CD4-positive, alpha-beta T cell (primary cell): ENCODE measurements at regions of chr19 and their contacts with region 1.

Region 1: DNA sequence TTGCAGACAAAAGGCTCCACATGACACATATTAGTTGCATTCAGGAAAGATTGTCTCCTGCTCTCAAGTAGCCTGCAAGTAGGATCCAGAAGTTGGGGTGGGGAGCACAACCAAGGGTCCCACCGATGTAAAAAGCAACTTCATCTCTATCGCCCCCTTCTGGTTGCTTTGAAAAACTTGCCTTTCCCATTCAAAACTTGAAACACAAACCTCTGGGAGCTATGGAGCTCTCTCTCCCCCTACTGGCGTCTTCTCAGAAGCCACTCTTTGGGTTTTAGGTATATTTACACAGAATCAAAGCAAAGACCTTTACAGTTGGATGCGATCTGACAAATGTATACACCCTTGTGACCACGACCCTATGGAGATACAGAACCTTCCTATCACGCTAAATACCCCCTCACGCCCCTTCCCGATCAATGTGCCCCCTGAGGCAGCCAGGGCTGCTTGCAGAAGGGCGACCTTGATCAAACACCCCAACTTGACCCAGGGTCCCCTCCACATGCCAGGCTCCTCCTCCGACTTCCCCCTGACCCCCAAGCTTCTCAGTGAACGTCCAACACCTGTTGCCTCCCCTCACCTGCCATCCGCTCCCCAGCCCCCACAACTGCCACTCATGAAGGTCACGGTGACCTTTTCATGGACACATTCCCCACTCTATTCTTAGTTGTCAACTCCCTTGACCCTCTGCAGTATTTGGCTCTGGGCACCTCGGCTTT is 10.1 kb downstream of the NOSIP start:
- DNase-seq: peak in 12 of 14 experiments; percentile 50 to 94 (median 66)
- ATAC-seq: peak; percentile 7
- H3K4me3 ChIP-seq: no peak overlapping the region
- H3K4me3 Mint-ChIP-seq: peak overlapping the region; percentile 85
- H3K27ac ChIP-seq: no peak overlapping the region
- H3K27ac Mint-ChIP-seq: peak overlapping the region; percentile 89
- H3K4me1 ChIP-seq: peaks cover 64% of the 10 kb centered on the region
- H3K4me1 Mint-ChIP-seq: peaks cover 55% of the 10 kb centered on the region
- H3K27me3 ChIP-seq: no peaks in the 10 kb centered on the region
- H3K27me3 Mint-ChIP-seq: no peaks in the 10 kb centered on the region
- CTCF ChIP-seq: peak; percentile 99

Region 2: GRCh38 chr19:49224856-49225255 is 345.4 kb before region 1 on chr19:
- CTCF ChIA-PET with region 1: no interaction called
- POLR2A ChIA-PET with region 1: no interaction called
- intact Hi-C with region 1: loop called in 1 of 2 experiments (anchors 1 kb)
- DNase-seq: peak in 5 of 14 experiments; percentile 11 to 56 (median 27)
- ATAC-seq: peak; percentile 43
- H3K4me3 ChIP-seq: no peak overlapping the region
- H3K4me3 Mint-ChIP-seq: no peak overlapping the region
- H3K27ac ChIP-seq: no peak overlapping the region
- H3K27ac Mint-ChIP-seq: no peak overlapping the region
- H3K4me1 ChIP-seq: peaks cover 8% of the 10 kb centered on the region
- H3K4me1 Mint-ChIP-seq: peaks cover 7% of the 10 kb centered on the region
- H3K27me3 ChIP-seq: peaks cover 0 to 4% of the 10 kb centered on the region in 2 experiments
- H3K27me3 Mint-ChIP-seq: peaks cover 13% of the 10 kb centered on the region
- CTCF ChIP-seq: no peak

Region 3: GRCh38 chr19:49301165-49301865 is 269.0 kb before region 1 on chr19:
- CTCF ChIA-PET with region 1: no interaction called
- POLR2A ChIA-PET with region 1: no interaction called
- intact Hi-C with region 1: no loop called
- DNase-seq: peak; percentile 64 to 88 (median 75)
- ATAC-seq: peak; percentile 95
- H3K4me3 ChIP-seq: no peak overlapping the region
- H3K4me3 Mint-ChIP-seq: no peak overlapping the region
- H3K27ac ChIP-seq: no peak overlapping the region
- H3K27ac Mint-ChIP-seq: no peak overlapping the region
- H3K4me1 ChIP-seq: peaks cover 6% of the 10 kb centered on the region
- H3K4me1 Mint-ChIP-seq: peaks cover 13% of the 10 kb centered on the region
- H3K27me3 ChIP-seq: no peaks in the 10 kb centered on the region
- H3K27me3 Mint-ChIP-seq: no peaks in the 10 kb centered on the region
- CTCF ChIP-seq: peak; percentile 79

Region 4: GRCh38 chr19:49473868-49474544 is 96.3 kb before region 1 on chr19 and contains the start of gene FLT3LG:
- CTCF ChIA-PET with region 1: interaction called, 20 read pairs
- POLR2A ChIA-PET with region 1: interaction called, 5 read pairs
- intact Hi-C with region 1: no loop called
- DNase-seq: peak; percentile 85 to 98 (median 90)
- ATAC-seq: peak; percentile 49
- H3K4me3 ChIP-seq: peak within 1 kb of the TSS; percentile 97
- H3K4me3 Mint-ChIP-seq: peak within 1 kb of the TSS; percentile 100
- H3K27ac ChIP-seq: peak within 1 kb of the TSS; percentile 90 to 98
- H3K27ac Mint-ChIP-seq: peak within 1 kb of the TSS; percentile 98
- H3K4me1 ChIP-seq: peaks cover 78% of the 10 kb centered on the region
- H3K4me1 Mint-ChIP-seq: peaks cover 59% of the 10 kb centered on the region
- H3K27me3 ChIP-seq: no peaks in the 10 kb centered on the region
- H3K27me3 Mint-ChIP-seq: no peaks in the 10 kb centered on the region
- CTCF ChIP-seq: peak; percentile 95
- total RNA-seq, gene FLT3LG: 311 to 325 TPM

Region 5: GRCh38 chr19:49502866-49503581 is 67.3 kb before region 1 on chr19:
- CTCF ChIA-PET with region 1: interaction called, 14 read pairs
- POLR2A ChIA-PET with region 1: no interaction called
- intact Hi-C with region 1: loop called (anchors 1 kb)
- DNase-seq: peak in 9 of 14 experiments; percentile 39 to 86 (median 56)
- ATAC-seq: no peak
- H3K4me3 ChIP-seq: no peak overlapping the region
- H3K4me3 Mint-ChIP-seq: peak overlapping the region; percentile 81
- H3K27ac ChIP-seq: peak overlapping the region in 1 of 2 donors; percentile 9
- H3K27ac Mint-ChIP-seq: peak overlapping the region; percentile 98
- H3K4me1 ChIP-seq: peaks cover 56% of the 10 kb centered on the region
- H3K4me1 Mint-ChIP-seq: peaks cover 60% of the 10 kb centered on the region
- H3K27me3 ChIP-seq: no peaks in the 10 kb centered on the region
- H3K27me3 Mint-ChIP-seq: no peaks in the 10 kb centered on the region
- CTCF ChIP-seq: peak; percentile 69

Region 6: DNA sequence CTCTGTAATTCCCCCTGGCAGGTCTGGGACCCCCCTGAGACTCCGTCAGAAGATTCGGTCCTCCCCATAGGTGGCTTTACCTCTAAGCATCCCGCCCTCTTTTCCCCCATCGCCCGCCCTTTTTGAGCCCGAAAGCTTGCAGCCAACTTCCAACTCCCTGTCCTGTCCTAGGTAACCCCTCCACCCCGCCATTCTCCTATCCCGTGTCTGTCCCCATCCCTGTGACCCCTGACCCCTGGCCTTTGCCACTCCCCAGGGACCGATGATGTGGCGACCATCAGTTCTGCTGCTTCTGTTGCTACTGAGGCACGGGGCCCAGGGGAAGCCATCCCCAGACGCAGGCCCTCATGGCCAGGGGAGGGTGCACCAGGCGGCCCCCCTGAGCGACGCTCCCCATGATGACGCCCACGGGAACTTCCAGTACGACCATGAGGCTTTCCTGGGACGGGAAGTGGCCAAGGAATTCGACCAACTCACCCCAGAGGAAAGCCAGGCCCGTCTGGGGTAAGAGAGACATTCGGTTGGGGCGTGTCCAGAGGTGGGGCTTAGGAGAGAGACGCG is 42.0 kb before region 1 on chr19:
- CTCF ChIA-PET with region 1: interaction called, 14 read pairs
- POLR2A ChIA-PET with region 1: interaction called, 19 read pairs
- intact Hi-C with region 1: loop called in 1 of 2 experiments (anchors 1 kb)
- DNase-seq: peak in 1 of 14 experiments; percentile 13
- ATAC-seq: no peak
- H3K4me3 ChIP-seq: peak overlapping the region; percentile 54
- H3K4me3 Mint-ChIP-seq: peak overlapping the region; percentile 84
- H3K27ac ChIP-seq: no peak overlapping the region
- H3K27ac Mint-ChIP-seq: no peak overlapping the region
- H3K4me1 ChIP-seq: peaks cover 20% of the 10 kb centered on the region
- H3K4me1 Mint-ChIP-seq: peaks cover 32% of the 10 kb centered on the region
- H3K27me3 ChIP-seq: no peaks in the 10 kb centered on the region
- H3K27me3 Mint-ChIP-seq: no peaks in the 10 kb centered on the region
- CTCF ChIP-seq: no peak

Region 7: DNA sequence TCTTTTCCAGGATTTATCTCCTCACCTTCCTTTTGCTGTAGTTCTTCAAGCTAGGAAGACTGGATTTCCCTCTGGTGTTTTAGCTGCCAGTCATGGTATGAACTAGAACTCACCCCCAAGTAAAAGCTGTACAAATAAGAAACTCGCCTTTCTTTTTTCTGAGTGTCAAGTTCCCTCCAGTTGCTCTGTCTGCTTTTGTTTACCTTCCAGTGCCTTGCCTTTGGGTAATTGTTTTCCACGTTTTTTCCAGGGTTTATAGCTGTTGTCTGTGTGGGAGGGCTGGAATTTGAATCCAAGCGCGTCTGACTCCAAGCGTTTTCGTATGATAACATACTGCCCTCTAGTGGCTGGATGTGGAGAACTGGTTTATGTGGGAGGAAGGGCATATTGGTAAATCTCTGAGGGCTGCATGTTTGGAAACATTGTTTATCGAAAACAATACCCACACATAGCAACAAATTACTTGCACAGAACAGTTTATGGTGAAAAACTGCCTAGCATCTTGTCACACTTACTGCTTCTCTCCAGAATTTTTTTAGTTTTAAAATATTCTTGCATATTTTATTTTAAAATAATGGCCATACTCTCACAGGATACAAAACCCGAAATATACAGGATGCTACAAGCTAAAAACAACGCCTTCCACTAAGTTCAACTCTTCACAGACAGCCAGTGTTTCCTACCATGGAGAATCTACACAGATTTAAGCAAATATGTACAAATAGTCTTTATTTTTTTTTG is 23.3 kb before region 1 on chr19:
- CTCF ChIA-PET with region 1: interaction called, 134 read pairs
- POLR2A ChIA-PET with region 1: interaction called, 150 read pairs
- intact Hi-C with region 1: loop called (anchors 1 kb)
- DNase-seq: peak in 6 of 14 experiments; percentile 59 to 90 (median 82)
- ATAC-seq: peak; percentile 79
- H3K4me3 ChIP-seq: peak overlapping the region; percentile 30
- H3K4me3 Mint-ChIP-seq: peak overlapping the region; percentile 85
- H3K27ac ChIP-seq: no peak overlapping the region
- H3K27ac Mint-ChIP-seq: peak overlapping the region; percentile 74
- H3K4me1 ChIP-seq: peaks cover 64% of the 10 kb centered on the region
- H3K4me1 Mint-ChIP-seq: peaks cover 54% of the 10 kb centered on the region
- H3K27me3 ChIP-seq: no peaks in the 10 kb centered on the region
- H3K27me3 Mint-ChIP-seq: no peaks in the 10 kb centered on the region
- CTCF ChIP-seq: peak; percentile 93

Region 8: DNA sequence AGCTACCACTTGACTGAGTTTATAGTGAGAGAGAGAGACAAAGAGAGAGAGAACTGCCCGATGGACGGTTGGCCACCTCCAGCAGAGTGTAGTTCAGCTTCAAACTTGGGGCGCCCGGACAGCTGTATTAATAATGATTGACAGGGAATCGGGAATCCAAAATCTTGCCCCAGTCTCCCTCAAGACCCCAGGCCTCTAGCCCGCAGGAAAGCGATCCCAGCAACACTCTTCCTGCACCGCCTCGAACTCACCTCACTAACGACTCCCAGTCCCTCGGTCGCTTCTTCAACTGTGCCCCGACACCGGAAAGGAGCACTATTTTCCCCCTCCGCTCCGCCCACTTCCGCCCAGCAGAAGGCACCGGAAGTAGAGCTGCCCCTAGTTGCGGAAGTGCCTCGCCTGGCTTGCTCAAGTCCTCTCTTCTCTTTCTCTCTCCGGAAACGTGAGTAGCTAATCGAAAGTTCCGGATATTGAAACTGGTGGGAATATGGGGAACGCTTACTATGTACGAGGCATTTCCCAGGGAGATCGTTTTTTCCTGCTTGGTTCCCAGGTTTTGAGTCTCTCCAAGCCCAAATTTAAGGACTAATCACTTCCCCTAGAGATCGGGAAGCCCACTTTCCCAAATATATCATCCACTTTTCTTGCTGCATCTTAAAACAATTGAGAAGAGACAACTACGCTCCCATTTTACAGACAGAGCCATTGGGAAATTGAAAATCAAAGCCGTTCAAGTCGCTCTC is 10.1 kb after region 1 on chr19 and contains the start of gene NOSIP:
- CTCF ChIA-PET with region 1: interaction called, 17 read pairs
- POLR2A ChIA-PET with region 1: interaction called, 16 read pairs
- intact Hi-C with region 1: loop called in 1 of 2 experiments (anchors 1 kb)
- DNase-seq: peak; percentile 93 to 98 (median 96)
- ATAC-seq: peak; percentile 98
- H3K4me3 ChIP-seq: peak within 1 kb of the TSS; percentile 75
- H3K4me3 Mint-ChIP-seq: peak within 1 kb of the TSS; percentile 90
- H3K27ac ChIP-seq: peak within 1 kb of the TSS in 1 of 2 donors; percentile 8
- H3K27ac Mint-ChIP-seq: peak within 1 kb of the TSS; percentile 67
- H3K4me1 ChIP-seq: peaks cover 18% of the 10 kb centered on the region
- H3K4me1 Mint-ChIP-seq: peaks cover 33% of the 10 kb centered on the region
- H3K27me3 ChIP-seq: no peaks in the 10 kb centered on the region
- H3K27me3 Mint-ChIP-seq: no peaks in the 10 kb centered on the region
- CTCF ChIP-seq: no peak
- total RNA-seq, gene NOSIP: 202 to 203 TPM

Region 9: GRCh38 chr19:49605605-49606004 is 35.3 kb after region 1 on chr19:
- CTCF ChIA-PET with region 1: no interaction called
- POLR2A ChIA-PET with region 1: no interaction called
- intact Hi-C with region 1: no loop called
- DNase-seq: no peak
- ATAC-seq: no peak
- H3K4me3 ChIP-seq: no peak overlapping the region
- H3K4me3 Mint-ChIP-seq: no peak overlapping the region
- H3K27ac ChIP-seq: no peak overlapping the region
- H3K27ac Mint-ChIP-seq: no peak overlapping the region
- H3K4me1 ChIP-seq: peaks cover 23% of the 10 kb centered on the region
- H3K4me1 Mint-ChIP-seq: peaks cover 16% of the 10 kb centered on the region
- H3K27me3 ChIP-seq: no peaks in the 10 kb centered on the region
- H3K27me3 Mint-ChIP-seq: no peaks in the 10 kb centered on the region
- CTCF ChIP-seq: no peak